Activated naive CD4-positive, alpha-beta T cell treated with anti-CD3 and anti-CD28 coated beads, Interleukin-2, amount 10 ng/mL, durations not matched to agents 7 days and 5 days (primary cell): ENCODE measurements at regions of chr13 and their contacts with region 1.

Region 1: DNA sequence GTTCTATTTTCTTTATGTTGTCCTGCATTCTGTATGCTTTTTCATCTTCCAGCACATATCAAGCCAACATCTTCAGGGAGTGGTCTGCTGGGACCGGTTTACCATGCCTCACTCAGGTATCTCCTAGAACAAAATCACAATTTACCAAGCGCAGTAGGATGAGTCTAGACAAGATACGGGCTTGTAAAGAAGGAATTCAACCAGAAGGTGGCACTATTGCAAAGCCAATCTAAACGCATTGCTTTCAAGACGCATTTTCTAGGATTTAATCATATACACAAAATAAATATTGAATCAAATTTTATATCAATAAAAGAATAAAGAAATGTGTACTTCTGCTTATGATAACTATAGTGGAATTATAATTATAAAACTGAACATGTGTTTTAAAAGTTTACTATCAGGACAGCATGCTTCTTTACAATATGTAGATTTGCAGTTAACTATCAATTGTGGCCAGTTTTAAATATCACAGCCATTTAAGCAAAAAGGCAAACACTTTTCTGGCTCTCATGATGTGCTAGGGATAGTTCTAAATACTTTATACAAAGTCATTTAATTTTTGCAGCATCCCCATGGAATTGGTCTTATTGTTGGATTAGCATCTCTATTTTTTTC is 16.1 kb upstream of the TPP2 start:
- DNase-seq: peak; percentile 49
- H3K4me3 Mint-ChIP-seq: no peak overlapping the region
- H3K27ac Mint-ChIP-seq: no peak overlapping the region
- H3K4me1 Mint-ChIP-seq: peaks cover 18% of the 10 kb centered on the region
- H3K27me3 Mint-ChIP-seq: peaks cover 10% of the 10 kb centered on the region

Region 2: GRCh38 chr13:102651892-102652291 is 71.2 kb after region 1 on chr13:
- CTCF ChIA-PET with region 1: no interaction called
- DNase-seq: no peak
- H3K4me3 Mint-ChIP-seq: no peak overlapping the region
- H3K27ac Mint-ChIP-seq: no peak overlapping the region
- H3K4me1 Mint-ChIP-seq: peaks cover 2% of the 10 kb centered on the region
- H3K27me3 Mint-ChIP-seq: no peaks in the 10 kb centered on the region

Region 3: GRCh38 chr13:102724923-102725322 is 144.3 kb after region 1 on chr13:
- CTCF ChIA-PET with region 1: interaction called, 19 read pairs
- DNase-seq: no peak
- H3K4me3 Mint-ChIP-seq: no peak overlapping the region
- H3K27ac Mint-ChIP-seq: no peak overlapping the region
- H3K4me1 Mint-ChIP-seq: no peaks in the 10 kb centered on the region
- H3K27me3 Mint-ChIP-seq: peaks cover 13% of the 10 kb centered on the region

Region 4: DNA sequence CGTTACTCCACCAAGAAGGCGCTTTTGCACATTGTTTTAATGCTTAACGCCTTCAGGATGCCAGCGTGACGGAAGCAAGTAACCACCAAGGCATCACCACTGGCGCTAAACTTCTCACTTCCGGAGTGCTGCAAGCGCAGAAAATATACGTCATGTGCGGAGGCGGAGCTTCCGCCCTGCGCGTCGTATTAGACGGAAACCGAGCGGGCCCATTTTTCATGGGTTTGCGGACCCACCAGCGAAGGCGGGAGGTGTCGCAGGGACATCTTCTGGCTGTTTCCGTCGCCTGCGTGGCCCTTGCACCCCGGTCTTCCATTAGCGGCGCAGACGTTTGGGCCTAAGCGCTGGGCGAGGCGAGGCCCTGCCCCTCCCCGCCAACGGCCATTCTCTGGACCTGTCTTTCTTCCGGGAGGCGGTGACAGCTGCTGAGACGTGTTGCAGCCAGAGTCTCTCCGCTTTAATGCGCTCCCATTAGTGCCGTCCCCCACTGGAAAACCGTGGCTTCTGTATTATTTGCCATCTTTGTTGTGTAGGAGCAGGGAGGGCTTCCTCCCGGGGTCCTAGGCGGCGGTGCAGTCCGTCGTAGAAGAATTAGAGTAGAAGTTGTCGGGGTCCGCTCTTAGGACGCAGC is 265.1 kb after region 1 on chr13 and contains the start of gene ERCC5:
- CTCF ChIA-PET with region 1: interaction called, 38 read pairs
- DNase-seq: peak; percentile 96
- H3K4me3 Mint-ChIP-seq: peak within 1 kb of the TSS; percentile 95
- H3K27ac Mint-ChIP-seq: peak within 1 kb of the TSS; percentile 99
- H3K4me1 Mint-ChIP-seq: peaks cover 48% of the 10 kb centered on the region
- H3K27me3 Mint-ChIP-seq: no peaks in the 10 kb centered on the region